Ovary (tissue), 10 donors: ENCODE measurements at regions of chr5 and their contacts with region 1.

Region 1: DNA sequence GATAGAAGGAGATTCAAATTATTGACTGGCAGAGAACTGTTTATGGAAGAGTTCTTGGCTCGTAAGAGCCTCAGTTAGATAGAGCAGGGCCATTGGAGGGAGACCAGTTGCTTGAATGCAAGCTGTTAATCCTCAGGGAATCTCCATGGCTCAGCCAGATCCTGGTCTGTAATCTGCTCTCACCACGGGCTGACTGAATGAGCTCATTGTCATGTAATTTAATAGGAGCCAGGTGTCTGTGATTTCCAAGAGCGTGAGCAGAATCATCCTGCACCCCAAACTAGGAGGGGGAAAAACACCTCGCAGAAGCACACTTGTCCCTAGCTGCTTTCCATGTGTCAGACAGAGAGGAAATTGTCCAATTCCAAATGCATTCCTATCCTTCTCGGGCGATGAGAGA is 19.1 kb upstream of the KCNMB1 start:
- DNase-seq: no peak
- H3K4me3 ChIP-seq: no peak overlapping the region
- H3K27ac ChIP-seq: no peak overlapping the region
- H3K4me1 ChIP-seq: no peaks in the 10 kb centered on the region
- H3K27me3 ChIP-seq: no peaks in the 10 kb centered on the region
- CTCF ChIP-seq: no peak
- EP300 ChIP-seq: no peak
- POLR2A ChIP-seq: no peak

Region 2: GRCh38 chr5:170097934-170098333 is 310.3 kb before region 1 on chr5:
- intact Hi-C with region 1: loop called in 1 of 4 experiments (anchors 10 kb)
- DNase-seq: no peak
- H3K4me3 ChIP-seq: no peak overlapping the region
- H3K27ac ChIP-seq: no peak overlapping the region
- H3K4me1 ChIP-seq: peaks cover 1% of the 10 kb centered on the region
- H3K27me3 ChIP-seq: no peaks in the 10 kb centered on the region
- CTCF ChIP-seq: no peak
- EP300 ChIP-seq: no peak
- POLR2A ChIP-seq: no peak

Region 3: DNA sequence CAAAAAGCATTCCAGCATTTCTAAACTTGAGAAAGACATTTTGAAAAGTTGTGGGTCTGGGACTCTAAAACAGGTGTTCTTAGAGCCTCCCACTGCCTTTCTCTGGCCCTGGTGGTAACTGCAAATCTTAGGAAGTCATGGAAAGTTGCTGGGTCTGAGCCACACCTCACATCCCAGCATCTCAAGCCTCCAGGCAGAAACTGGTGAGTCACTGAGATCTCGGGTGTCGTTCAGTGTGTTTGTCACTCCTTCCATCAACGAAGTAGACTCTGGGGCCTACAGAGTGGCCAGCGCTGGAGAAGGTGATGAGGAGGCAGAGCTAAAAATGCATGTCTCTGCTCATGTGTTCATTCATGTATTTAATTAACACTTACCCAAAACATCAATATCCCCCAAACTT is 235.0 kb before region 1 on chr5:
- intact Hi-C with region 1: no loop called
- DNase-seq: no peak
- H3K4me3 ChIP-seq: no peak overlapping the region
- H3K27ac ChIP-seq: no peak overlapping the region
- H3K4me1 ChIP-seq: no peaks in the 10 kb centered on the region
- H3K27me3 ChIP-seq: no peaks in the 10 kb centered on the region
- CTCF ChIP-seq: no peak
- EP300 ChIP-seq: no peak
- POLR2A ChIP-seq: no peak

Region 4: DNA sequence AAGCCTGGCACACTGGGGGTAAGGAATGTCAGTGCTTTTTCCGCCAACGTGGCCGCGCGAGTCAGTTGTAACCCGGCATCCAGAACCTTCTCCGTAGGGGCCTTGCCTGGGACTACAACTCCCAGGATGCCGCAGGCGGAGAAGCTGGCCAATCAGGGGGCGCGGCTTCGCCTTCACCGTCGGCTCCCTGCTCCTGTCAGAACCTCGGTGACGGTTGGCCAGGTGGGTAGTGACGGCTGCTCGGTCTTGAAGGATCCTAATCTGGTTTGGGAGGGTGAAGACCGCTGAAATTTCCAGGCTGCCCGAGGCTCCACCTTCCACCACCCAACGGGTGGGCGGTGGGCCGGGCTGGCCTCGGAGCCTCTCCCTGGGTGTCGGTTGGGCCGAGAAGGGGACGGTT is 175.4 kb before region 1 on chr5 and contains the start of gene C5orf58:
- intact Hi-C with region 1: loop called in 1 of 4 experiments (anchors 5 kb)
- DNase-seq: no peak
- H3K4me3 ChIP-seq: no peak within 1 kb of the TSS
- H3K27ac ChIP-seq: no peak within 1 kb of the TSS
- H3K4me1 ChIP-seq: no peaks in the 10 kb centered on the region
- H3K27me3 ChIP-seq: no peaks in the 10 kb centered on the region
- CTCF ChIP-seq: no peak
- EP300 ChIP-seq: no peak
- POLR2A ChIP-seq: no peak
- total RNA-seq, gene C5orf58: not detected

Region 5: DNA sequence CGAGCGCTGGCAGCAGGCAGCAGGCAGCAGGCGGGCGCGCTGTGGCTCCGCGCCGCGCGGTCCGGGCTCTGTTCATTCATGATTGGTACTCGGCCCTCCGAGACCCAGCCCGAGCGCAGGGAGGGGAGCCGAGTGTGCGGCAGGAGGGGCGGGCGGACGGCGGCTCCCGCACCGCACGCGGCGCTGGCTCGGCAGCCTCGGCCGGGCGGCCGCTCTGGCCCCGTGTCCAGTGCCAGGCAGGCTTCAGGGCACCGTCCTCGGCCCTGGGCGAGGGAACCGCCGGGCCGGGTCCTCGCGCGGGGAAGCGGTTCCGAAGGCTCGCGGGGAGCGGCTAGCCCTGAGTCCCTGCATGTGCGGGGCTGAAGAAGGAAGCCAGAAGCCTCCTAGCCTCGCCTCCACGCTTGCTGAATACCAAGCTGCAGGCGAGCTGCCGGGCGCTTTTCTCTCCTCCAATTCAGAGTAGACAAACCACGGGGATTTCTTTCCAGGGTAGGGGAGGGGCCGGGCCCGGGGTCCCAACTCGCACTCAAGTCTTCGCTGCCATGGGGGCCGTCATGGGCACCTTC is 95.9 kb after region 1 on chr5:
- intact Hi-C with region 1: no loop called
- DNase-seq: peak in 1 of 5 donors; percentile 44
- H3K4me3 ChIP-seq: no peak overlapping the region
- H3K27ac ChIP-seq: no peak overlapping the region
- H3K4me1 ChIP-seq: no peaks in the 10 kb centered on the region
- H3K27me3 ChIP-seq: no peaks in the 10 kb centered on the region
- CTCF ChIP-seq: no peak
- EP300 ChIP-seq: no peak
- POLR2A ChIP-seq: no peak